Uterus (tissue), 4 donors: ENCODE measurements at regions of chr1 and their contacts with region 1.

Region 1: GRCh38 chr1:245153081-245153551 is 1.7 kb upstream of the KIF26B start:
- DNase-seq: peak; percentile 31 to 42
- H3K4me3 ChIP-seq: peak overlapping the region; percentile 30 to 41
- H3K27ac ChIP-seq: no peak overlapping the region
- H3K4me1 ChIP-seq: peaks cover 0 to 32% of the 10 kb centered on the region in 2 donors
- H3K27me3 ChIP-seq: peaks cover 0 to 6% of the 10 kb centered on the region in 2 donors
- CTCF ChIP-seq: peak; percentile 41 to 66 (median 48)
- POLR2A ChIP-seq: no peak

Region 2: DNA sequence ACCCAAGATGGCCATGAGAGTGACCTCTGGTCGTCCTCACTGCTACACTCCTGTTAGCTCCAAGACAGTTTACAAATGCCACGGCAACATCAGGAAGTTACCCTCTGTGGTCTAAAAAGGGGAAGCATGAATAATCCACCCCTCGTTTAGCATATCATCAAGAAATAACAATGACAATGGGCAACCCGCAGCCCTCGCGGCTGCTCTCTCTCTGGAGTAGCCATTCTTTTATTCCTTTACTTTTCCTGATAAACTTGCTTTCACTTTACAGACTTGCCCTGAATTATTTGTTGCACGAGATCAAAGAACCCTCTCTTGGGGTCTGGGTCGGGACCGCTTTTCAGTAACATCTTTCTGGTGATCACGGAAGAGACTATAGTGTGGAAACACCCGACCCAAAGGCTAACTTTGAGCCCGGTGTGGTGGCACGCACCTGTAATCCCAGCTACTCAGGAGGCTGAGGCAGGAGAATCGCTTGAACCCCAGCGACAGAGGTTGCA is 337.5 kb before region 1 on chr1:
- intact Hi-C with region 1: no loop called
- DNase-seq: no peak
- H3K4me3 ChIP-seq: no peak overlapping the region
- H3K27ac ChIP-seq: no peak overlapping the region
- H3K4me1 ChIP-seq: no peaks in the 10 kb centered on the region
- H3K27me3 ChIP-seq: no peaks in the 10 kb centered on the region
- CTCF ChIP-seq: no peak
- POLR2A ChIP-seq: no peak

Region 3: DNA sequence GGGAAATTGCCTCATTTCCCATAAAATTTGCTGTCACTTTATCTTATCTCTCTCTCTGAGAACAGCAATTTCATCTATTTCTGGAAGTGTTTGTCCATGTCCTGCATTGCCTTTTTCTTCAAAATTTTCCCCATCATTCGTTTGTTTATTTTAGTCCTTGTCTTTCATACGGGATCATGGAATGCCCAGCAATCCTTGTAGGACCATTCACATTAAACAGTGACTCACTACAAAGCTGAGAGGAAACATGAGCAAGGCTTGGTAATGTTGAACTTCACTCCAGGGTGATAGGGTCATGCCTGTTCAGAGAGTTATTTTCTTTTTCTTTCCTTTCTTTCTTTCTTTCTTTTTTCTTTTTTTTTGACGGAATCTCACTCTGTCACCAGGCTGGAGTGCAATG is 256.6 kb before region 1 on chr1:
- intact Hi-C with region 1: no loop called
- DNase-seq: no peak
- H3K4me3 ChIP-seq: no peak overlapping the region
- H3K27ac ChIP-seq: no peak overlapping the region
- H3K4me1 ChIP-seq: no peaks in the 10 kb centered on the region
- H3K27me3 ChIP-seq: no peaks in the 10 kb centered on the region
- CTCF ChIP-seq: no peak
- POLR2A ChIP-seq: no peak

Region 4: GRCh38 chr1:245216366-245217115 is 63.4 kb after region 1 on chr1:
- intact Hi-C with region 1: no loop called
- DNase-seq: no peak
- H3K4me3 ChIP-seq: no peak overlapping the region
- H3K27ac ChIP-seq: no peak overlapping the region
- H3K4me1 ChIP-seq: no peaks in the 10 kb centered on the region
- H3K27me3 ChIP-seq: no peaks in the 10 kb centered on the region
- CTCF ChIP-seq: no peak
- POLR2A ChIP-seq: no peak

Region 5: DNA sequence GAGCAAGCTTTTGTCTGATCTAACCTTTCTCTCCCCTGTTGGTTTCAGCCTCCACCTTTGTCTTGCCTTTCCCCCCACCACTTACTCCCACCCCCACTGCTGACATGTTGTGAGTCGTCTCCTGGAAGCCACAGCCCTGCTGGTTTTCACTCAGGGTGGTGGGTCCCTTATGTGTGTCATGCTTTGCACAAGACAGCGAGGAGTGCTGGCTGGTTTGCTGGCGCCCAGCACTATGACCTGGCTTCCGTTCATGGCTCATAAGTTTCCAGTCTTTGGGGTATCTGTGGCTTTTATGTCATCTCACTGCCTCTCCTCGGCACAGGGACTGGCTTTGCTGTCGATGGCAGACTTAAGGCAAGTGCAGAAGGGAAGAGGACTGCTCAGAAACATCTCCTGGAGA is 179.4 kb after region 1 on chr1:
- intact Hi-C with region 1: no loop called
- DNase-seq: no peak
- H3K4me3 ChIP-seq: no peak overlapping the region
- H3K27ac ChIP-seq: no peak overlapping the region
- H3K4me1 ChIP-seq: no peaks in the 10 kb centered on the region
- H3K27me3 ChIP-seq: no peaks in the 10 kb centered on the region
- CTCF ChIP-seq: no peak
- POLR2A ChIP-seq: no peak

Region 6: DNA sequence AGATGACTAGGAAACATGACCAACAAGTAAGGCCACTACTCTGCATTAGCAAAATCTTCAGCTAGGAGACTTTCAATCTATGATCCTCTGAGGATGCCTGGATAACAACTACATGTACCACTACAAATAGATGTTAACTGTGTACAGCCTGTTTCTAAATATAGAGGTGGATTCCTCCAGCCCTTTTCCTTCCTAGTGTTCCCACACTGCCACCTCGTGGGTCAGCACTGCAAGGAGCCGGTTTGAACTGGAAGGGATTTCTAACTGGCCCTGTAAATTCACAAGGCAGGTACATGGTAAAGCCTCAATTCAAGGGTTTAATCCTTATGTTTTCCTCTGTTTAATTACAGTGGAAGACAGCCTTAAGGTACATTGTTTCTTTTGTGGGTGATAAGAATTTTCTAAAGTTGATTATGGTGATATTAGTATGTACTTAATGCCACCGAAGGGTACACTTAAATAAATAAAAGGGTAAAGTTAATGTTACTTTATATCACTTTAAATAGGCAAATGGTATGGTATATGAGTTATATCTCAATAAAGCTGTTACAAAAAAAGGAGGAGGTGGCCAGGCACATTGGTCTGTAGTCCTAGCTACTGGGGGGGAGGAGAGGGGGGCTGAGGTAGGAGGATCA is 1339.6 kb after region 1 on chr1:
- intact Hi-C with region 1: loop called (anchors 5 kb)
- DNase-seq: peak; percentile 51 to 67
- H3K4me3 ChIP-seq: no peak overlapping the region
- H3K27ac ChIP-seq: no peak overlapping the region
- H3K4me1 ChIP-seq: no peaks in the 10 kb centered on the region
- H3K27me3 ChIP-seq: no peaks in the 10 kb centered on the region
- CTCF ChIP-seq: peak; percentile 65 to 79 (median 68)
- POLR2A ChIP-seq: no peak